ENCODE measurements at regions of chr1 and their contacts with region 1.

Region 1: GRCh38 chr1:203006948-203007871 is at the start of gene TMEM183A:
- DNase-seq: peak; percentile 82
- ATAC-seq: peak; percentile 86
- H3K4me3 Mint-ChIP-seq: peak within 1 kb of the TSS; percentile 96
- H3K27ac Mint-ChIP-seq: peak within 1 kb of the TSS; percentile 97
- H3K4me1 Mint-ChIP-seq: peaks cover 35% of the 10 kb centered on the region
- H3K27me3 Mint-ChIP-seq: no peaks in the 10 kb centered on the region
- CTCF ChIP-seq: no peak
- total RNA-seq, gene TMEM183A: 62.5 and 70.6 TPM in 2 replicates

Region 2: GRCh38 chr1:202160377-202160940 is 846.8 kb before region 1 on chr1 and contains the start of gene PTPN7:
- CTCF ChIA-PET with region 1: no interaction called
- POLR2A ChIA-PET with region 1: no interaction called
- intact Hi-C with region 1: loop called (anchors 5 kb)
- DNase-seq: peak; percentile 64
- ATAC-seq: peak; percentile 60
- H3K4me3 Mint-ChIP-seq: peak within 1 kb of the TSS; percentile 91
- H3K27ac Mint-ChIP-seq: peak within 1 kb of the TSS; percentile 92
- H3K4me1 Mint-ChIP-seq: peaks cover 83% of the 10 kb centered on the region
- H3K27me3 Mint-ChIP-seq: no peaks in the 10 kb centered on the region
- CTCF ChIP-seq: no peak
- total RNA-seq, gene PTPN7: 29.4 and 31.0 TPM in 2 replicates

Region 3: GRCh38 chr1:202810615-202811295 is 196.5 kb before region 1 on chr1 and contains the start of gene PCAT6:
- CTCF ChIA-PET with region 1: no interaction called
- POLR2A ChIA-PET with region 1: interaction called, 9 read pairs
- intact Hi-C with region 1: loop called (anchors 2 kb)
- DNase-seq: peak; percentile 88
- ATAC-seq: peak; percentile 82
- H3K4me3 Mint-ChIP-seq: peak within 1 kb of the TSS; percentile 93
- H3K27ac Mint-ChIP-seq: peak within 1 kb of the TSS; percentile 80
- H3K4me1 Mint-ChIP-seq: peaks cover 36% of the 10 kb centered on the region
- H3K27me3 Mint-ChIP-seq: no peaks in the 10 kb centered on the region
- CTCF ChIP-seq: no peak
- total RNA-seq, gene PCAT6: 0.67 and 0.83 TPM in 2 replicates

Region 4: GRCh38 chr1:202905331-202905730 is 101.9 kb before region 1 on chr1:
- CTCF ChIA-PET with region 1: no interaction called
- POLR2A ChIA-PET with region 1: no interaction called
- intact Hi-C with region 1: no loop called
- DNase-seq: no peak
- ATAC-seq: no peak
- H3K4me3 Mint-ChIP-seq: no peak overlapping the region
- H3K27ac Mint-ChIP-seq: no peak overlapping the region
- H3K4me1 Mint-ChIP-seq: no peaks in the 10 kb centered on the region
- H3K27me3 Mint-ChIP-seq: no peaks in the 10 kb centered on the region
- CTCF ChIP-seq: no peak

Region 5: DNA sequence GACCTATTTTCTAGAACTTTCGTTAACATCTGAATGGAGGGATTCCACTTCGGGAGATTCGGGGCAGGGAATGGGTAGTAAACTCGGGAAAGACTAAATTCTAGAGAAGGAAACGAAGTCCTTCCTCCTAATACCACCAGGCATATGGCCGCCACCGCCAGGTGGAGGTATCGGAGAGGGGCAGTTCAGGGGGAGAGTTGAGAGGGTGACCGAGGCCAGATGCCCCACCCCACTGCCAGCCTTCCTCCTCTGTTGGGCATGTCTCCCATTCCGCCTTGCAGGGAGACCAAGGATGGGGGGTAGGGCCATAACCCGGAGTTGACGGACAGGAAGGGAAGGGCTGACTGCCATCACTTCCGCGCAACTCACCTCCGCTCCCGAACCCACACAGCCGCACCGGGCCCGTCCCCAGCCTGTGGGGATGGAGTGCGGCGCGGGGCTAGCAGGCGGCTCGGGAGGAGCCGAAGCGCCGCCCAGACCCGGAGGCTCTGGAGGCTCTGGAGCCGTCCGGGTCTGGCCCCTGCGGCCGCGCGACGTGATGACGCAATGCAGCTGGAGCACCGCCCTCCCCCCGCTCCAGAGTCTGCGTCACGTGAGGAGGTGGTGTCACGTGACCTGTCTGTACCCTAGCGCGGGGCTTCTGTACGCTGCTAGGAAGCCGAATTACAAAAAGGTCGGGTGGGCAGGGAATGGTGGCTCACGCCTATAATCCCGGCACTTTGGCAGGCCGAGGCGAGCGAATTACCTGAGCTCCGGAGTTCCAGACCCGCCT is 80.3 kb before region 1 on chr1 and contains the start of gene KLHL12:
- CTCF ChIA-PET with region 1: no interaction called
- POLR2A ChIA-PET with region 1: interaction called, 12 read pairs
- intact Hi-C with region 1: loop called (anchors 1 kb)
- DNase-seq: peak; percentile 92
- ATAC-seq: peak; percentile 93
- H3K4me3 Mint-ChIP-seq: peak within 1 kb of the TSS; percentile 94
- H3K27ac Mint-ChIP-seq: peak within 1 kb of the TSS; percentile 92
- H3K4me1 Mint-ChIP-seq: peaks cover 24% of the 10 kb centered on the region
- H3K27me3 Mint-ChIP-seq: no peaks in the 10 kb centered on the region
- CTCF ChIP-seq: no peak
- total RNA-seq, gene KLHL12: 30.4 and 30.8 TPM in 2 replicates

Region 6: GRCh38 chr1:202968840-202969295 is 38.3 kb before region 1 on chr1:
- CTCF ChIA-PET with region 1: no interaction called
- POLR2A ChIA-PET with region 1: interaction called, 37 read pairs
- intact Hi-C with region 1: loop called (anchors 1 kb)
- DNase-seq: peak; percentile 30
- ATAC-seq: peak; percentile 65
- H3K4me3 Mint-ChIP-seq: peak overlapping the region; percentile 89
- H3K27ac Mint-ChIP-seq: peak overlapping the region; percentile 88
- H3K4me1 Mint-ChIP-seq: peaks cover 45% of the 10 kb centered on the region
- H3K27me3 Mint-ChIP-seq: no peaks in the 10 kb centered on the region
- CTCF ChIP-seq: no peak

Region 7: GRCh38 chr1:203326830-203327683 is 319.8 kb after region 1 on chr1:
- CTCF ChIA-PET with region 1: no interaction called
- POLR2A ChIA-PET with region 1: no interaction called
- intact Hi-C with region 1: loop called (anchors 5 kb)
- DNase-seq: peak; percentile 91
- ATAC-seq: peak; percentile 79
- H3K4me3 Mint-ChIP-seq: peak overlapping the region; percentile 84
- H3K27ac Mint-ChIP-seq: peak overlapping the region; percentile 96
- H3K4me1 Mint-ChIP-seq: peaks cover 77% of the 10 kb centered on the region
- H3K27me3 Mint-ChIP-seq: no peaks in the 10 kb centered on the region
- CTCF ChIP-seq: no peak

Region 8: GRCh38 chr1:204411451-204412204 is 1404.4 kb after region 1 on chr1 and contains the start of gene PPP1R15B:
- CTCF ChIA-PET with region 1: no interaction called
- POLR2A ChIA-PET with region 1: no interaction called
- intact Hi-C with region 1: loop called (anchors 5 kb)
- DNase-seq: peak; percentile 96
- ATAC-seq: peak; percentile 89
- H3K4me3 Mint-ChIP-seq: peak within 1 kb of the TSS; percentile 99
- H3K27ac Mint-ChIP-seq: peak within 1 kb of the TSS; percentile 99
- H3K4me1 Mint-ChIP-seq: peaks cover 29% of the 10 kb centered on the region
- H3K27me3 Mint-ChIP-seq: no peaks in the 10 kb centered on the region
- CTCF ChIP-seq: no peak
- total RNA-seq, gene PPP1R15B: 60.4 and 70.6 TPM in 2 replicates

Measured in activated B cell treated with CpG ODN at 0.5 μM for 24 hours (primary cell).